ENCODE measurements at regions of chr11 and their contacts with region 1.

Region 1: DNA sequence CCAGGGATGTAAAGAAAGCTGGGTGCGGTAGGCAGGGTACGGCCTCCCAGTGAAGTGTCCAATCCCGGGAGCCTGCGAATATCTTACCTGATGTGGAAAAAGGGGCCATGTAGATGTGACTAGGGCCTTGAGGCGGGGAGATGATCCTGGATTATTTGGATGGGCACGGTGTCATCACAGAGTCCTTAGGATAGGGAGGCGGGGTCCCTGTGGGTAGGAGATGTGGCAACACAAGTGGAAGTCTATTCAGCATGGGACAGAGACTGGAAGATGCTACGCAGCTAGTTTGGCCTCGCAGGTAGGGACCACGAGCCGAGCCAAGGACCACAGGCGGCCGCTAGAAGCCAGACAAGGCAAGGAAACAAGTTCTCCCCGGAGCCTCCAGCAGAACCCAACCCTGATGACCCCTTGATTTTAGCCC is 46.4 kb upstream of the SHANK2 start:
- DNase-seq: no peak
- H3K4me3 ChIP-seq: no peak overlapping the region
- H3K27ac ChIP-seq: peak overlapping the region; percentile 66
- H3K4me1 ChIP-seq: peaks cover 49% of the 10 kb centered on the region
- H3K27me3 ChIP-seq: no peaks in the 10 kb centered on the region
- CTCF ChIP-seq: no peak

Region 2: GRCh38 chr11:71129624-71130023 is 169.1 kb before region 1 on chr11:
- CTCF ChIA-PET with region 1: no interaction called
- POLR2A ChIA-PET with region 1: no interaction called
- intact Hi-C with region 1: no loop called
- DNase-seq: peak in 1 of 2 experiments; percentile 5
- H3K4me3 ChIP-seq: no peak overlapping the region
- H3K27ac ChIP-seq: no peak overlapping the region
- H3K4me1 ChIP-seq: no peaks in the 10 kb centered on the region
- H3K27me3 ChIP-seq: no peaks in the 10 kb centered on the region
- CTCF ChIP-seq: no peak

Region 3: GRCh38 chr11:71240865-71241691 is 57.7 kb before region 1 on chr11:
- CTCF ChIA-PET with region 1: interaction called, 5 read pairs
- POLR2A ChIA-PET with region 1: no interaction called
- intact Hi-C with region 1: loop called (anchors 1 kb)
- DNase-seq: peak; percentile 89 to 97
- H3K4me3 ChIP-seq: peak overlapping the region; percentile 43
- H3K27ac ChIP-seq: peak overlapping the region; percentile 88
- H3K4me1 ChIP-seq: peaks cover 25% of the 10 kb centered on the region
- H3K27me3 ChIP-seq: no peaks in the 10 kb centered on the region
- CTCF ChIP-seq: no peak

Region 4: GRCh38 chr11:71269603-71270511 is 28.9 kb before region 1 on chr11:
- CTCF ChIA-PET with region 1: no interaction called
- POLR2A ChIA-PET with region 1: no interaction called
- intact Hi-C with region 1: loop called (anchors 2 kb)
- DNase-seq: peak; percentile 52 to 75
- H3K4me3 ChIP-seq: no peak overlapping the region
- H3K27ac ChIP-seq: no peak overlapping the region
- H3K4me1 ChIP-seq: peaks cover 13% of the 10 kb centered on the region
- H3K27me3 ChIP-seq: no peaks in the 10 kb centered on the region
- CTCF ChIP-seq: no peak

Region 5: GRCh38 chr11:71283881-71284441 is 14.8 kb before region 1 on chr11:
- CTCF ChIA-PET with region 1: interaction called, 3 read pairs
- POLR2A ChIA-PET with region 1: interaction called, 7 read pairs
- intact Hi-C with region 1: loop called (anchors 1 kb)
- DNase-seq: peak; percentile 92 to 97
- H3K4me3 ChIP-seq: peak overlapping the region; percentile 55
- H3K27ac ChIP-seq: peak overlapping the region; percentile 90
- H3K4me1 ChIP-seq: peaks cover 32% of the 10 kb centered on the region
- H3K27me3 ChIP-seq: no peaks in the 10 kb centered on the region
- CTCF ChIP-seq: no peak

Region 6: GRCh38 chr11:71349627-71350026 is 50.9 kb after region 1 on chr11:
- CTCF ChIA-PET with region 1: no interaction called
- POLR2A ChIA-PET with region 1: no interaction called
- intact Hi-C with region 1: no loop called
- DNase-seq: no peak
- H3K4me3 ChIP-seq: no peak overlapping the region
- H3K27ac ChIP-seq: no peak overlapping the region
- H3K4me1 ChIP-seq: no peaks in the 10 kb centered on the region
- H3K27me3 ChIP-seq: peaks cover 83% of the 10 kb centered on the region
- CTCF ChIP-seq: no peak

Region 7: DNA sequence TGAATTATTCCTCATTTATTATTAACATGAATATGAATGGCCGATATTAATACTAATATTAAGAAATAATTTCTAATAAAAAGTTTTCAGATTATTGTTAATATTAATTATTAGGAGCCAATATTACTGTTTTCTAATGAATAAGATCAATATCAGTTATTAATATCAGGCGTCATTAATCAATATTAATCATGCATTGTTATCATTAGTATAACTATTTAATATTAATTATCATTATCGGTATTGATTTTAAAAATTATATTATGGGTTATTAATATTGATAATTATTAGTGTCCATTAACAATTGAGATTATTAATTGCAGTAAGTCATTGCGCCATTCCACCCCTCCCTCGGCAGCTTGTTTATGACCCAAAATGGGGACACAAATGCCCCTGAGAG is 286.9 kb after region 1 on chr11:
- CTCF ChIA-PET with region 1: no interaction called
- POLR2A ChIA-PET with region 1: no interaction called
- intact Hi-C with region 1: loop called (anchors 2 kb)
- DNase-seq: no peak
- H3K4me3 ChIP-seq: no peak overlapping the region
- H3K27ac ChIP-seq: no peak overlapping the region
- H3K4me1 ChIP-seq: peaks cover 22% of the 10 kb centered on the region
- H3K27me3 ChIP-seq: no peaks in the 10 kb centered on the region
- CTCF ChIP-seq: no peak